WTC11 (cell line): ENCODE measurements at regions of chr5 and their contacts with region 1.

Region 1: DNA sequence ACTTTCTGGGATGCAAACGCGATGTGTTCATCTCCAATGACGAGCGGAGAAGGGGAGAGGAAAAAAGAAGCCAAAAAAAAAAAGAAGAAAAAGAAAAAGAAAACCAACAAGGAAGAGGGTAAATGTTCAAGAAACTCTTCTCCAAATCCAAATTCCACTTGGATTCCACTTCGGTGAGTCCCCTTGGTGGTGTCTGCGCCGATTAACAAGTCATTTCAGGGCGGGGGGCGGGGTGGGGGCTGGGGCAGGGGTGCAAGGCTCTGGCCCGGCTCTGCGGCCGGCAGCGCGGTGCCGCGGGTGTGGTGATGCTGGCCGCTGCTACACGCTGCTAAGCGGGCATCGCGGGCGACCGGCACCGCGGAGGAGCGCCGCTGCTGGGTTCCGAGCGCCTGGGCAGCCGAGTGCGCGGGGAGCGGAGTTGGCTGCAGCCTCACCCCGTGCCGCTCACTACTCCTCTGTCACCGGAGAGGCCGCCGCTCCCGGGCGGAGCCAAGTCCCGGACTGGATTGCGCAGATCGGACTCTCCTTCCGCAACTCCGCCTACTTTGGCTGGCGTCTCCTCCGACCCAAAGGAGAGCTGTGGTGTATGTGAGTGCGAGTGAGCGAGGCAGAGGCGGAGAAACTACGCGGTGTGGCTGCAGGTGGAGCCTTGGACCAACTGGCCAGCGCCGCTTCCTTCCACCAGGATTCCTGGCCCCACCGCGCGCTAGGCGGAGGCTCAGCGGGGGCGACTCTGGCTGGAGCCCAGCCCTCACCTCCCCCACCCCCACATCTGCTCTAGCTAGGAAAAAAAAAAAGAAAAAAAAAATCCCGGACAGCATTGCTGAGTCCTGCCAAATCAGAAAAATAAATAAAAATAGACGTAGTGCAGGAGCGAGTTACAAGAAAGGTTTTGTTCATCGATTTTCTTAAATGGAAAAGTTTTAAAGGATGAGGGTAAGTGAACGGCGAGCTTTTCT is at the start of gene SEMA6A:
- DNase-seq: peak; percentile 97
- ATAC-seq: peak; percentile 82
- H3K4me3 Mint-ChIP-seq: peak within 1 kb of the TSS; percentile 100
- H3K27ac Mint-ChIP-seq: peak within 1 kb of the TSS; percentile 99
- H3K4me1 Mint-ChIP-seq: peaks cover 42% of the 10 kb centered on the region
- H3K27me3 Mint-ChIP-seq: no peaks in the 10 kb centered on the region
- CTCF ChIP-seq: no peak
- total RNA-seq, gene SEMA6A: 336 to 406 TPM (median 357 TPM) in 3 replicates

Region 2: GRCh38 chr5:116559239-116559638 is 15.4 kb before region 1 on chr5:
- CTCF ChIA-PET with region 1: interaction called, 4 read pairs
- POLR2A ChIA-PET with region 1: interaction called, 13 read pairs
- DNase-seq: peak; percentile 72
- ATAC-seq: peak; percentile 71
- H3K4me3 Mint-ChIP-seq: peak overlapping the region; percentile 60
- H3K27ac Mint-ChIP-seq: peak overlapping the region; percentile 98
- H3K4me1 Mint-ChIP-seq: peaks cover 87% of the 10 kb centered on the region
- H3K27me3 Mint-ChIP-seq: no peaks in the 10 kb centered on the region
- CTCF ChIP-seq: no peak

Region 3: DNA sequence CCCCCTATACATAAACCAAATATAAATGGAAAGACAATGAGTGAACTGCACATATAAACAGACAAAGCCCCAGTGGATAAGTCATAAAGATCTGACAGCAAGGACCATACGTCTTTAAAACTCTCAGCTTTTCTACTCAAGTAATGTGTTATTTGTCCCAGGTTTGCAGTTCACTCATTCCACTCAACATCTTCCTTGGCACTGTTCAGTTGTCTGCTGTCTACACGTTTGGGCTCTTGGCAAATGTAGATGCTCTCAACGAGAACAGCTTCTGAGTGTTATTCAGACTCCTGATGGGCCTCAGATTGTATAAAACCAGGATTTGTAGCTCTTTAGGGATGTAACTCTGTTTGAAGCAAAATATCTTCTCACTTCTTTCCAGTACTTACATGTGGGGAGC is 198.2 kb after region 1 on chr5:
- CTCF ChIA-PET with region 1: interaction called, 14 read pairs
- POLR2A ChIA-PET with region 1: interaction called, 4 read pairs
- DNase-seq: no peak
- ATAC-seq: no peak
- H3K4me3 Mint-ChIP-seq: no peak overlapping the region
- H3K27ac Mint-ChIP-seq: peak overlapping the region; percentile 99
- H3K4me1 Mint-ChIP-seq: peaks cover 80% of the 10 kb centered on the region
- H3K27me3 Mint-ChIP-seq: no peaks in the 10 kb centered on the region
- CTCF ChIP-seq: no peak

Region 4: DNA sequence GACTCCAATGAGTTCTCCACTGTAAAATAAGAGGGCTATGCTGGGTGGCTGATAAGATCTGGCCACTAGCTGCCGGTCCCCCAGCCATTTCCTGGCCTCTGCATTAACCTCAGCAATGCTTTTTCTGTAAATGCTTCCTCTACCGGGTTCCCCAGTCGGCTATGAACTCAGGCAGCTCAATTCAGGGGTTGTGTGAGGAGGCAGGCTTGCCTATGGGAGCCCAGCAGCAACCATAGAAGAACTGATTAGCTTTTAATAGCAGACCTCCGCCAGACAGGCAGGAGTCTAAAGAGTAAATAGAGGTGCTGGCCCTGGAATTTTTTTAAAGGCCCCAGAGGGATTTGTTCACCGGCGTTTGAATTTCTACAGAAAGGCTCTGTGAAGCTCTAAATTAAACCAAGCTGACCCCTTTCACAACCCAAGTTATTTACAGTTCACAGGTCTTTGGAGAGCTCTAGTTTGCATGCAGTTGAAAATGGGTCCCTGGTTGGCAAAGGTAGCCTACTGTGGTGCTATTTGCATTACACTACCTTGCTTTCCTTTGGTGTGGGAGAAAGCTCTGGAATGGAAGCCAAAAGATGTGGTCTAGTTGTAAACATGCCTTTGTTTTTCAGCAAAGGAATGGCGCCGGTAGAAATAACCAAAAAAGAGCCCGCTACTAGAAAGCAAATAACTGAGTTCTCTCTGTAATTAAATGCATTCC is 289.6 kb after region 1 on chr5:
- CTCF ChIA-PET with region 1: interaction called, 11 read pairs
- POLR2A ChIA-PET with region 1: interaction called, 26 read pairs
- DNase-seq: peak; percentile 61
- ATAC-seq: peak; percentile 93
- H3K4me3 Mint-ChIP-seq: peak overlapping the region; percentile 35
- H3K27ac Mint-ChIP-seq: peak overlapping the region; percentile 98
- H3K4me1 Mint-ChIP-seq: peaks cover 61% of the 10 kb centered on the region
- H3K27me3 Mint-ChIP-seq: no peaks in the 10 kb centered on the region
- CTCF ChIP-seq: no peak

Region 5: DNA sequence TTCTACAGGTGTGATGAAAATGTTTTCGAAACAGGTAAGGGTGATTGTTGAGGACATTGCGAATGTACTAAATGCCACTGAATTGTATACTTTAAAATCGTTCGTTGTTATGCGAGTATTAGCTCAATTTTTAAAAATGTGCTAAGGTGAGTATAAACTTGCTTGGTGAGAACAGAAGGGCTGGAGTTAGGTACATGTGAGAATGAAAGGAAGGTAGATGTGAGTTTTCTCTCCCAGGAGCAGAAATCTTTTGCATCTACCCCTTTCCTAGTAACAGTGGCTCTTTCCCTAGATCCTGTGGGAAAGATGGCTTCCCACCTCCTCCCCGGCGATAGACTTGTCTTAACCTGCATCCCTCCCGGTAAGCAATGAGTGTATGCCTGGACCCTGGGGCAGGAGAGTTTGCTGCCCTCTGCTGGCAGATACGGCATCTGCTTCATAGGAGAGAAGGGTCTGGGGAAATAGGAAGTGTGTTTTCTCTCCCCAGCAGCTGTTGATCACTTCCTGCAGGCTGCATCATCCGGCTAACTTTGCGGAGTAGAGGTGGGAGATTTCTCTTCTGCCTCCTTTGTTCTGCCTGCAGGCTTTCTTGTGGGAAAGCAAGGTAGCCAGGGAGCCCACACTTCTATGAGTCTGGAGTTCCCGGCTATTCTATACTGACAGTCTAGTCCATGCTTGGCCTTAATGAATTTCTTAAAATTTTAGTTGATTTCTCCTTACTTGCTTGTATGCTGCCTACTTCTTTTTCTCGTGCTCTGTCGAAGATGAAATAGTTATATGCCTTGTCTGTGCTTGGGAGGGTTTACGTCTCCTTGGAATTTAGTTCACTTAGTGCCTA is 373.3 kb after region 1 on chr5:
- CTCF ChIA-PET with region 1: interaction called, 30 read pairs
- POLR2A ChIA-PET with region 1: interaction called, 4 read pairs
- DNase-seq: peak; percentile 95
- ATAC-seq: peak; percentile 91
- H3K4me3 Mint-ChIP-seq: no peak overlapping the region; the same call in 1 of the 2 replicates
- H3K27ac Mint-ChIP-seq: peak overlapping the region; percentile 86
- H3K4me1 Mint-ChIP-seq: peaks cover 67% of the 10 kb centered on the region
- H3K27me3 Mint-ChIP-seq: no peaks in the 10 kb centered on the region
- CTCF ChIP-seq: peak; percentile 88